GM12878 (cell line): ENCODE measurements at regions of chr7 and their contacts with region 1.

Region 1: DNA sequence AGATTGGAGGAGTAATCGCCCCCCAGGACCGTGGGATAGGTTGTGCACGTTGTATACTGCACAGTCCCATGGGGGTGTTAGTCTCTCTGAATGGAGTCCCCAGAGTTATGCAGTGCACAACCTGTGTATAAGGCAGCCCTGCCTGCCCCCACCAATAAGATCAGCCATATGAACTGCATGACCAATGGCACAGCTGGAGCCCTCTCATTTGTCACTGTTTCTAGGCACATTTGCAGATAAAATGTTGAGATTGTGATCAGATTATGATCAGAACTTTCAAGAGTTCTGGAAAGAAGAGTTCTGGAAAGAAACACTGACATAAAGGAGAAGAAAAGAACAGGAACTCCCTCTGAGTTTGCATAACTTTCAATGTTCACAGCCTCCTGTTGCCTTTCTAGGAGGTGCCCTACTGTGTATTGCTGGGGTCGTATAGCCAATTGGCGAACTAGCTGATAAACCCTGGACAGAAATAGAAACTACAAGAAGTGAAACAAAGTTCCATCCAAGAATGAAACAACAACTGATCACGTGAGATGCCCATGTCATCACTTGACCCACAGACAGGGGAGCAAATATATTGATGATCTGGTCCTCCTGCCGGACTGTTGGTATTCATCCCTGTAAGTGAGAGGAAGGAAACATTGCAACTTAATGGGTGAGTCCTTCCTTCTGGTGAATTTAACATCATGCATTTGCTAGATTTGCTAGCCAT is 49.6 kb upstream of the TOMM7 start:
- DNase-seq: peak; percentile 69
- ATAC-seq: peak; percentile 99
- H3K4me3 ChIP-seq: 0 out of 2 replicates have a peak overlapping the region, but pooled peaks have one; percentile 18
- H3K27ac ChIP-seq: peak overlapping the region; percentile 62
- H3K4me1 ChIP-seq: peaks cover 7% of the 10 kb centered on the region
- H3K27me3 ChIP-seq: no peaks in the 10 kb centered on the region
- CTCF ChIP-seq: no peak
- EP300 ChIP-seq: no peak
- POLR2A ChIP-seq: no peak; the same call in 1 of the 2 replicates
- RAD21 ChIP-seq: no peak

Region 2: DNA sequence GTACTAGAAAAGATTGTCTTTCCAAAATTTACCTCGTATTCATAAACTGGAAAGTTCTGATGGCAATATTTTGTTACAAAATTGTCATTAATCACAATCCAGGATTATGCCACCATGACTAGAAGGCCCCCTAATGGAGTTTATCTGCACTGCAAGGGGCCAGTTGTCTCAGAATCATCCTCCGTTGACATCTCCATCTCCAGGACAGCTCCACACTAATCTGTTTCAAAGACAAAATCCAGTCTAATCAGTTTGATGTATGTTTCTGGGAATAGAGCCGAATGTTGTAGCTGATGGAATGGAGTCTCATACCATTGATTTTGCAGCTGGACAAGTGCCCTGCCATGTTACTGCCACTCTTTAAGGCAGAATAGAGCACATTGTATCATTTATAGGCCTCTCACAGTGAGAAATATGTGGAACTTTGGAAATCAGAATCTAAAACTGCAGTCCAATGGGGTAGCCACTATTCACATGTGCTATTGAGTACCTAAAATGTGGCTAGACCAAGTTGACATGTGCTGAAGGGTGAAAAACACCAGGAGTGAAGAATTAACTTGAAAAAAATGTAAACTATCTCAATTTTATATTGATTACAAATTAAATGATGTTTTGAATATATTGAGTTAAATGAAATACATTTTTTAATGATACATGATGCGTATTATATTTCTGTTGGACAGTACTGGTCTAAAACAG is 11.3 kb before region 1 on chr7:
- CTCF ChIA-PET with region 1: interaction called, 45 read pairs
- POLR2A ChIA-PET with region 1: interaction called, 20 read pairs
- RAD21 ChIA-PET with region 1: interaction called, 46 read pairs
- SMC1A ChIA-PET with region 1: interaction called, 34 read pairs
- in situ Hi-C with region 1: no loop called
- intact Hi-C with region 1: loop called (anchors 1 kb)
- DNase-seq: no peak
- ATAC-seq: no peak
- H3K4me3 ChIP-seq: no peak overlapping the region
- H3K27ac ChIP-seq: peak overlapping the region; percentile 1; the same call in 1 of the 2 replicates
- H3K4me1 ChIP-seq: peaks cover 10% of the 10 kb centered on the region
- H3K27me3 ChIP-seq: no peaks in the 10 kb centered on the region
- CTCF ChIP-seq: peak; percentile 20 to 59 (median 59); a peak in 5 of 6 replicates
- EP300 ChIP-seq: no peak
- POLR2A ChIP-seq: no peak
- RAD21 ChIP-seq: no peak

Region 3: DNA sequence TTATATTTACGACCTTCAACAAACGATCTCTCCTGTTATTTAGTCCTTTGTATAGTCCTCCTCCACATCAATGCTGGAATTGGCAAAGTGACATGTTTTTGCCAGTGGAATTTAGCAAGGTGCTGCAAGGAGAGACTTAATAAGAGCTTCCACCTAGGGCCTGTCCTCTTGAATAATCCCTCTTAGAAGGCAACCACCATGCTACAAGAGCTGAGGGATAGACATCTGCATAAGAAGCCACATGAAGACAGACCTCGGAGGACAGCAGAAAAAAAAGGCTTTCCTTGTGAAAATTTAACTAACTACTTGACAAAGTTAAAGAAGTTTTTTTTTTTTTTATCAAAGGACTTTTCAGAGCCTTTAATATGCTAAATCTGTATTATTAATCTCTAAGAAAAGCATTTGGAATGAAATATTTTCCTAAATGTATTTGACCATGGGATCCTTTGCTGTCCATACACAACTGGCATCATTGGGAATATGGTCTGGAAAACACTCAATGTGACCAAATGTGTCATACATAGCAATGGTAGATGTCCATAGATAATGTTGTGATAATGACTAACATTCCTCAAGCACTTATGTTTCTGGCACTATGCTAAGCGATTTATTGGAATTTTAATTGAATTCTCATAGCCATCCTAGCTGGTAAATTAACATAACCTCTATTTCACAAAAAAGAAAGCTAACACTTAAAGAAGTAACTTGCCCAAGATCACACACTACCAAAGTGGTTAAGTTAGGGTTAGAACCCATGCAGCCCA is 128.5 kb after region 1 on chr7:
- CTCF ChIA-PET with region 1: no interaction called
- POLR2A ChIA-PET with region 1: interaction called, 5 read pairs
- RAD21 ChIA-PET with region 1: no interaction called
- SMC1A ChIA-PET with region 1: interaction called, 14 read pairs
- in situ Hi-C with region 1: no loop called
- intact Hi-C with region 1: no loop called
- DNase-seq: no peak
- ATAC-seq: no peak
- H3K4me3 ChIP-seq: no peak overlapping the region
- H3K27ac ChIP-seq: peak overlapping the region; percentile 83
- H3K4me1 ChIP-seq: peaks cover 39% of the 10 kb centered on the region
- H3K27me3 ChIP-seq: no peaks in the 10 kb centered on the region
- CTCF ChIP-seq: no peak
- EP300 ChIP-seq: no peak
- POLR2A ChIP-seq: no peak
- RAD21 ChIP-seq: no peak